Endothelial cell of umbilical vein (primary cell): ENCODE measurements at regions of chr6 and their contacts with region 1.

Region 1: DNA sequence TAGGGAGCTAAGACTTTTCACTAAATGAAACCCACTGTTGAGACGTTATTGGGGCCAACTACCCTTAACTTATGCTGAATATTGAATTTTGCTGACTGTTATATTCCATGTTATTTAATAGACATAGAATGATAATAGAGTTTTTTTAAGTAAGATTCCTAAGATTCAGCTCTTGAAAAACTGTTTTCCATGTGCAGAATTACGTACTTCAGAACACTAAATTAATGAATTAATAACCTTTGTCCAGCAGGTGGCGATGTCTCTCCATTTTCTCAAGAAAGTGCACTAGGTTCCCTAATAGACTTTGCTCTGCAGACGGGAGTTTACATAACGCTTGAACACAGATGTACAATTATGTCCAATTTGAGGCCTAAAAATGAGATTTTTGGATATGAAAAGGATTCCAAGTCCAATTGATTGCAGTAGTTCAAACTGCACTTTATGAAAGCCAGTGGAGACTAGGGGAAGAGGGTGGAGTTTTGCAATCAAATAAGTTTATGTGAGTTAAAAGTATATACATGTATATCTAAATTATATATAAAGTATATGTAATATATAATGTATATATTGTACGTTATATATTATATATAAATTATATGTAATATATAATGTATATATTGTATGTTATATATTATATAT is 282.1 kb downstream of the UST start:
- DNase-seq: peak; percentile 82
- H3K4me3 ChIP-seq: no peak overlapping the region
- H3K27ac ChIP-seq: no peak overlapping the region
- H3K4me1 ChIP-seq: no peaks in the 10 kb centered on the region
- H3K27me3 ChIP-seq: peaks cover 0 to 3% of the 10 kb centered on the region in 2 experiments
- CTCF ChIP-seq: peak; percentile 36 to 40
- POLR2A ChIP-seq: no peak

Region 2: GRCh38 chr6:148578245-148578732 is 450.6 kb before region 1 on chr6:
- CTCF ChIA-PET with region 1: interaction called, 9 read pairs
- POLR2A ChIA-PET with region 1: no interaction called
- dilution Hi-C with region 1: no loop called
- intact Hi-C with region 1: loop called (anchors 2 kb)
- DNase-seq: peak; percentile 68
- H3K4me3 ChIP-seq: no peak overlapping the region
- H3K27ac ChIP-seq: no peak overlapping the region
- H3K4me1 ChIP-seq: no peaks in the 10 kb centered on the region
- H3K27me3 ChIP-seq: no peaks in the 10 kb centered on the region
- CTCF ChIP-seq: peak; percentile 76 to 79
- POLR2A ChIP-seq: no peak

Region 3: GRCh38 chr6:149060300-149060997 is 31.6 kb after region 1 on chr6:
- CTCF ChIA-PET with region 1: interaction called, 16 read pairs
- POLR2A ChIA-PET with region 1: no interaction called
- dilution Hi-C with region 1: no loop called
- intact Hi-C with region 1: no loop called
- DNase-seq: peak; percentile 37
- H3K4me3 ChIP-seq: no peak overlapping the region
- H3K27ac ChIP-seq: no peak overlapping the region
- H3K4me1 ChIP-seq: peaks cover 10% of the 10 kb centered on the region
- H3K27me3 ChIP-seq: peaks cover 19 to 35% of the 10 kb centered on the region in 2 experiments
- CTCF ChIP-seq: no peak
- POLR2A ChIP-seq: no peak

Region 4: GRCh38 chr6:149190224-149190831 is 161.4 kb after region 1 on chr6:
- CTCF ChIA-PET with region 1: interaction called, 4 read pairs
- POLR2A ChIA-PET with region 1: no interaction called
- dilution Hi-C with region 1: no loop called
- intact Hi-C with region 1: loop called (anchors 5 kb)
- DNase-seq: peak; percentile 38
- H3K4me3 ChIP-seq: no peak overlapping the region
- H3K27ac ChIP-seq: no peak overlapping the region
- H3K4me1 ChIP-seq: no peaks in the 10 kb centered on the region
- H3K27me3 ChIP-seq: no peaks in the 10 kb centered on the region
- CTCF ChIP-seq: peak; percentile 8 to 13
- POLR2A ChIP-seq: no peak

Region 5: DNA sequence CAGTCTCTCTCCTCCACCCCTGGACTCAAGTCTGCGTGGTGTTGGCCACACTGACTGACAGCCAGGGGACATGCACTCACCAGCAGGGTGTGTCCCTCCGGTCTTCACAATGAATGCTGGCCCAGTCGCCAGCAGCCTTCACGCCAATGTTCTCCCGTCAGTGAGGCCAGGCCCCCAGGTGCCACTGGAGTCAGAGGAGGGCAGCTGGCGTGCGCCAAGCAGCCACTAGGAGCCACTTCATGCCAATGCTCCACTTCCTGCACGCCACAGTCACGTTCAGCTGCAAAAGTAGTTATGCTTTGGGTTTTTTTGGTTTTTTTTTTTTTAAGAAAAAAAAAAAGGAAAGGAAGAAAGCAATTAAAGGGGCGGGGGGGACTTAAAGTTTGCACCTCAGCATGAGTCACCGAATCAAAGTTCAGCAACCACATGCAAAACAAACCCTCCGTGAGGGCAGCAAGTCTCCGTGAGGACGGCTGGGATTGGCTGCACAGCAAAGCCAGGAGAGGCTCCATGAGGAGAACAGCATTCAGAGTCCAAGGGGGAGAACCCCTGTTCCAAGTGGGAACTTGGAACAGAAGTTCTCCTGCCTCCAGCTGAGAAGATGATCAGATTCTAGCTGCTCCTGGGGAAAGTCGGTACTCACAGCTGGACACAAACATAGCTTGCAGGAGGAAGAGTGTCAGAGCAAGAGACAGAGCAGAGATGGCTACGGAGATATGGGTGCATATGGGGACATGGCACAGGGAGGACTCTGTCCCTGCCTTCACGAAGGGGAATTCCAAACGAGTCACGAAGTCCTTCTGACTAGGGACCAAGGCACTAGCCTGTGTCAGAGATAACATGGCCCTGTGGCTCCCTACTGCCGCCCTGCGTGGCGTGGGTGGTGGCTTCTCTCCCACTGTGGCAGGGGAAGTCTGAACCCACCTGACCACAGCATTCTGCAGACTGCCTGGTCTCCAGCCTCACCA is 456.1 kb after region 1 on chr6 and contains the start of gene ZC3H12D:
- CTCF ChIA-PET with region 1: interaction called, 12 read pairs
- POLR2A ChIA-PET with region 1: no interaction called
- dilution Hi-C with region 1: no loop called
- intact Hi-C with region 1: no loop called
- DNase-seq: no peak
- H3K4me3 ChIP-seq: no peak within 1 kb of the TSS
- H3K27ac ChIP-seq: no peak within 1 kb of the TSS
- H3K4me1 ChIP-seq: peaks cover 3% of the 10 kb centered on the region
- H3K27me3 ChIP-seq: no peaks in the 10 kb centered on the region
- CTCF ChIP-seq: no peak
- POLR2A ChIP-seq: no peak
- total RNA-seq, gene ZC3H12D: not detected in 2 replicates

Region 6: GRCh38 chr6:149925974-149926777 is 897.3 kb after region 1 on chr6:
- CTCF ChIA-PET with region 1: interaction called, 3 read pairs
- POLR2A ChIA-PET with region 1: no interaction called
- dilution Hi-C with region 1: no loop called
- intact Hi-C with region 1: loop called (anchors 10 kb)
- DNase-seq: peak; percentile 80
- H3K4me3 ChIP-seq: peak overlapping the region; percentile 19 to 47 (median 45)
- H3K27ac ChIP-seq: no peak overlapping the region
- H3K4me1 ChIP-seq: peaks cover 4% of the 10 kb centered on the region
- H3K27me3 ChIP-seq: peaks cover 20 to 21% of the 10 kb centered on the region in 2 experiments
- CTCF ChIP-seq: peak; percentile 72 to 91
- POLR2A ChIP-seq: no peak